ENCODE measurements at regions of chr9 and their contacts with region 1.

Region 1: DNA sequence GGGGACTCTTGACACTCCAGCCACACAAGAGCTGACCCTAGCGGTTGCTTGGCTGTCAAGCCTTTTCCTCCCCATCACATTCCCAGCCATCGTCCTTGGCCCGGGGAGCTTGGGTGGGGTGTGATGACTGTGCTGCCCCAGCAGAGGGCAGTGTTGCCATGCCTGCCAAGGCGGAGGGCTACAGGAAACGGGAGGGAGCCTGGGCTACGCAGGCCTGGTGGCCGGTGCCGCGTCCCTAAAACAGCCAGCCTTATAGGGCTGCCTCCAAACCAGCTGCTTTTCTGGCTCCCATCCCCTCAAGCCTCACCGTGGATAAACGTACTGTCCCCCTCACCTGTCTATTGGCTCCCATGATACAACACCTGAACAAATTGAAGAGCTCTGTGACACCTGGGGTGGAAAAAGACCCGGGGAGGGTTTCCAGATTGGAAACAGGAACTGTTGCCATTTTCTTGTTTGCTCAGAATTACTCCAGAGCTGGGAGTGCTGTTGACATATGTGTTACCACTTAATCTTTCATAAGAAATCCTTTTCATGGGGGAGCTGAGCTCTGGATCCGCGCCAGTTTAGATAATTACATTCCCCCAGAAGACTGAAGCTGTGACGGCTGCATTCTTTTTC is 72.8 kb upstream of the ASTN2 start:
- DNase-seq: peak; percentile 84
- H3K4me3 ChIP-seq: no peak overlapping the region
- H3K27ac ChIP-seq: no peak overlapping the region
- H3K4me1 ChIP-seq: no peaks in the 10 kb centered on the region
- H3K27me3 ChIP-seq: peaks cover 7% of the 10 kb centered on the region
- CTCF ChIP-seq: peak; percentile 97

Region 2: GRCh38 chr9:117555964-117556629 is 68.4 kb after region 1 on chr9:
- CTCF ChIA-PET with region 1: interaction called, 13 read pairs
- POLR2A ChIA-PET with region 1: no interaction called
- intact Hi-C with region 1: loop called (anchors 2 kb)
- DNase-seq: peak; percentile 73
- H3K4me3 ChIP-seq: no peak overlapping the region
- H3K27ac ChIP-seq: no peak overlapping the region
- H3K4me1 ChIP-seq: no peaks in the 10 kb centered on the region
- H3K27me3 ChIP-seq: no peaks in the 10 kb centered on the region
- CTCF ChIP-seq: peak; percentile 72

Measured in A673 (cell line).